Activated CD4-positive, alpha-beta T cell treated with anti-CD3 and anti-CD28 coated beads for 36 hours (primary cell): ENCODE measurements at regions of chr1 and their contacts with region 1.

Region 1: GRCh38 chr1:26500488-26501175 is 28.4 kb downstream of the HMGN2 start:
- DNase-seq: peak; percentile 95
- ATAC-seq: peak; percentile 77
- H3K4me3 Mint-ChIP-seq: peak overlapping the region; percentile 88
- H3K27ac Mint-ChIP-seq: peak overlapping the region; percentile 94
- H3K4me1 Mint-ChIP-seq: peaks cover 16% of the 10 kb centered on the region
- H3K27me3 Mint-ChIP-seq: no peaks in the 10 kb centered on the region

Region 2: DNA sequence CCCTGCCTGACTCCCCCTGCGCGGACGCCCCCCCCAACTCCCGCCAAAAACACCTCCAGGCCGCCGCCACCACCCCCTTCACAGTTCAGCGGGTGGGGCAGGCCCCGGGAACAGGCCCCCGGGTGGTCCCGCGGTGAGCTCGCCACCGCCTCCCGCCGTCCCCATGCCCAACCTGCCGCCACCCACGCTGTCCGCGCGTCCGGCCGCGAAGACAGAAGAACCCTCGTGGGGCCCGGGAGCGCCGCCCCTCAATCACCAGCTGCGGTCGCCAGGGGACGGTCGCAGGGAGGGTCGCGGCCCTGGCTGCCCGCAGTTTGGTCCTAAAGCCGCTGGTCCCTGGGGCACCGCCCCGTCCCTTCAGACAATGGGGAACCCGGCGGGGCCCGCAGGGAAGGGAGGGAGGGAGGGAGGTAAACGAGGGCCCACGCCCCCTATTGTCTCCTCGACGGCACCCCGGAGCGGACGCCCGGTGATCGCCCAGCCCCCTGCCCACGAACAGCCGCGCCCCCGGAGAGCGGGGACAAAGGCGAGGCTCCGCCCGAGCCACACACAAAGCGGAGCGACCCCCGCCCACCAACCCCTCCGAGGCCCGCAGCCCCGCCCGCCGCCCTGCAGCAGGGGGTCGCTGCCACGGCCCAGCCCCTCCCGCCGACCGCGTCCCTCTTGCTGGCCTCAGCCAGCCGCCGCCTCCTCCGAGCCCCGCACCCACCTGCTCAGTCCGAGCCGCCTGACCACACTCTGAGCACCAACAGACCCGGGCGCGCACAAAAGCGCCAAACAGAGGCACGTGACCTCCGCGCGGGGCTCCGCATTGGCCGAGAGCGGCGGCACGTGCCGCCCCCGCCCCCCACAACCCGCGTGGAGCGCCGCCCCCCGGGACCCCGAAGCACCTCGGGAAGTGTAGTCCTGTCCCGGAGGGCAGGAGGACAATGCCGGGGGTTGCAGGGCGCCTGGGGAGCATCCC is 594.7 kb before region 1 on chr1 and contains the start of gene STMN1:
- CTCF ChIA-PET with region 1: no interaction called
- POLR2A ChIA-PET with region 1: interaction called, 3 read pairs
- intact Hi-C with region 1: loop called in 1 of 2 experiments (anchors 1 kb)
- DNase-seq: peak; percentile 96
- ATAC-seq: peak; percentile 81
- H3K4me3 Mint-ChIP-seq: peak within 1 kb of the TSS; percentile 84
- H3K27ac Mint-ChIP-seq: peak within 1 kb of the TSS; percentile 83
- H3K4me1 Mint-ChIP-seq: peaks cover 25% of the 10 kb centered on the region
- H3K27me3 Mint-ChIP-seq: no peaks in the 10 kb centered on the region
- total RNA-seq, gene STMN1: 557 to 771 TPM

Region 3: DNA sequence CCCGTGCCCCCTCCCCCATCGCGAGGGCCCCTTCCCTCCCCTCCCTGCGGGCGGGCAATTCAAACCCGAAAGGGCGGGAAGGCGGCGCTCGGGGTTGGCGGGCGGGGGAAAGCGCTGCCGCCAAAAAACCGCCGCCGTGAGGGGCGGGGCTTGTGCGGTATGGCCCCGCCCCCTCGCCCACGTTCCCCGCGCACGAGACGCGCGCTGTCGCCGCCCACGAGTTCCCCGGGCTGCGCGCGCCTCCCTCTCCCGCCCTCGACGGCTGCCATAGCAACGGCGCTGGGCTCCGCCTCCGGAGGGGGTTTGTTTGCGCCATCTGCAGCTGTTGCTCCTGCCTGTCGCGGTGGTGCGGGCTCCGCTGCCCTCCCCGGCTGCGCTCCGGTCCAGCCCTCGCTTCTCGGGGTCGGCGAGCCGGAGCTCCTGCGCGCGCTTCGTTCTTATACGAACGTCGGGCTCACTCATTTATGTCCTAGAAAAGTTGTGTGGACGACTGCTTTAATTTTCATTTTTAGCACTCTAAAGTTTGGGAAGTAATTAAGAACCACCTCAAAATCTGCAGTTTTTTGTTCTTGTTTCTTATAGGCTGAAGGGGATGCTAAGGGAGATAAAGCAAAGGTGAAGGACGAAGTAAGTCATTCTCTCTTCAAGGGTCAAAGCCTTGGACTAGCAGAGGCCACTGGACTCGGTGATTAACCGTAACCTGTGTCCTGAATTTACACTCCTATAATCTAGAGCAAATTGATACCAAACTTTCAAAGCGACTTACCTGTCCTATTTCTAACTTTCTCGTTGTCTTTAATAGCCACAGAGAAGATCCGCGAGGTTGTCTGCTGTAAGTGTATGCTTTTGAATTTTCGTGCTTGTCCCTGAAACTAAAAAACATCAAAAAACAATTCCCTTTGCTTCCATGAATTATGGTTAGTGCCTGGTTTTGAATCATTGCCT is 27.5 kb before region 1 on chr1:
- CTCF ChIA-PET with region 1: interaction called, 12 read pairs
- POLR2A ChIA-PET with region 1: interaction called, 7 read pairs
- intact Hi-C with region 1: loop called in 1 of 2 experiments (anchors 1 kb)
- DNase-seq: peak; percentile 97
- ATAC-seq: peak; percentile 62
- H3K4me3 Mint-ChIP-seq: peak overlapping the region; percentile 91
- H3K27ac Mint-ChIP-seq: peak overlapping the region; percentile 43
- H3K4me1 Mint-ChIP-seq: peaks cover 50% of the 10 kb centered on the region
- H3K27me3 Mint-ChIP-seq: no peaks in the 10 kb centered on the region

Region 4: GRCh38 chr1:26541816-26542711 is 41.4 kb after region 1 on chr1:
- CTCF ChIA-PET with region 1: interaction called, 22 read pairs
- POLR2A ChIA-PET with region 1: interaction called, 7 read pairs
- intact Hi-C with region 1: loop called (anchors 1 kb)
- DNase-seq: peak; percentile 93
- ATAC-seq: peak; percentile 65
- H3K4me3 Mint-ChIP-seq: peak overlapping the region; percentile 67
- H3K27ac Mint-ChIP-seq: peak overlapping the region; percentile 94
- H3K4me1 Mint-ChIP-seq: peaks cover 83% of the 10 kb centered on the region
- H3K27me3 Mint-ChIP-seq: no peaks in the 10 kb centered on the region

Region 5: DNA sequence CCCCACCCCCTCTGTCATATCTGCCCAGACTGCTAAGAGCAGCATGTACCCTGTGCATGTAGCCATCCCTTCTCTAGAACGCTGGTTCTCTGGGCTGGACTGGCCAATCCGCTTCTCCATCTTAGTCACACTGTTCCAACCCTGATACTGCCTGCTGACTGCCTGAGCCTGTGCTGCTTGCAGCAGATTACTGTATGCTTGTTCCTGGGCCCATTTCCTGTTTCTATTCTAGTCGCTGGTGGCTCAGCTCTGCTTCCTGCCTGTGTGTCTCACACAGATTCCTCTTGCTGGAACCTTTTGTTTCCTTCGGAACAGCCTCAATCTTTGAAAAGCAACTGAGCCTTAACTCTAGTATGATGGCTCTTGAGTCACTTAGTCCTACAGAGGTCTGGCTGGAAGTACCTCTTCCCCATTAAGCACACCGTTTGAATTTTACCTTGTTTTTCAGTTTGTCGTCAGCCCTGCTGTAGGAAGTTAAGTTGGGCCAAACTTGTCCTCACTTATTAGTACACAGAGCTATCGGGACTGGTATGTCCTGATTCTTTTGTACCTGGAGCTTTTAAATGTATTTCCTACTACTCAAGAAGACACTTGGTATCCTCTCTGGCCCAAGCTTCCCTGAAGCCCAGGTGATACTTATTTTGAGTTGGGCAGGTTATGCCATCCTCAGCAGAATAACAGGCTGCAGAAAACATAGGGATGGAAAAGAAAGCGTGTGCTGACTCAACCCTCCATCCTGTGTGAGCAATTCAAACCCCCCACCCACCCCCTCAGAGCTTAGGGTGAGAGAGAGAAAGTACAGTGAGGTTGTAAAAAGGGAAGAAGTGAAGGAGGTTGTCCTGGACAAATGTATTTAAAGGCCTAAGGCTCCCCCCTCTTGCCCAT is 243.7 kb after region 1 on chr1:
- CTCF ChIA-PET with region 1: no interaction called
- POLR2A ChIA-PET with region 1: no interaction called
- intact Hi-C with region 1: loop called in 1 of 2 experiments (anchors 1 kb)
- DNase-seq: peak; percentile 90
- ATAC-seq: peak; percentile 93
- H3K4me3 Mint-ChIP-seq: peak overlapping the region; percentile 67
- H3K27ac Mint-ChIP-seq: peak overlapping the region; percentile 97
- H3K4me1 Mint-ChIP-seq: peaks cover 93% of the 10 kb centered on the region
- H3K27me3 Mint-ChIP-seq: no peaks in the 10 kb centered on the region

Region 6: GRCh38 chr1:26900001-26900814 is 399.6 kb after region 1 on chr1 and contains the start of gene GPATCH3:
- CTCF ChIA-PET with region 1: no interaction called
- POLR2A ChIA-PET with region 1: no interaction called
- intact Hi-C with region 1: loop called in 1 of 2 experiments (anchors 2 kb)
- DNase-seq: peak; percentile 95
- ATAC-seq: peak; percentile 93
- H3K4me3 Mint-ChIP-seq: peak within 1 kb of the TSS; percentile 94
- H3K27ac Mint-ChIP-seq: peak within 1 kb of the TSS; percentile 100
- H3K4me1 Mint-ChIP-seq: peaks cover 17% of the 10 kb centered on the region
- H3K27me3 Mint-ChIP-seq: no peaks in the 10 kb centered on the region
- total RNA-seq, gene GPATCH3: 7.0 to 8.7 TPM